GM13977 (cell line): ENCODE measurements at regions of chr1 and their contacts with region 1.

Region 1: DNA sequence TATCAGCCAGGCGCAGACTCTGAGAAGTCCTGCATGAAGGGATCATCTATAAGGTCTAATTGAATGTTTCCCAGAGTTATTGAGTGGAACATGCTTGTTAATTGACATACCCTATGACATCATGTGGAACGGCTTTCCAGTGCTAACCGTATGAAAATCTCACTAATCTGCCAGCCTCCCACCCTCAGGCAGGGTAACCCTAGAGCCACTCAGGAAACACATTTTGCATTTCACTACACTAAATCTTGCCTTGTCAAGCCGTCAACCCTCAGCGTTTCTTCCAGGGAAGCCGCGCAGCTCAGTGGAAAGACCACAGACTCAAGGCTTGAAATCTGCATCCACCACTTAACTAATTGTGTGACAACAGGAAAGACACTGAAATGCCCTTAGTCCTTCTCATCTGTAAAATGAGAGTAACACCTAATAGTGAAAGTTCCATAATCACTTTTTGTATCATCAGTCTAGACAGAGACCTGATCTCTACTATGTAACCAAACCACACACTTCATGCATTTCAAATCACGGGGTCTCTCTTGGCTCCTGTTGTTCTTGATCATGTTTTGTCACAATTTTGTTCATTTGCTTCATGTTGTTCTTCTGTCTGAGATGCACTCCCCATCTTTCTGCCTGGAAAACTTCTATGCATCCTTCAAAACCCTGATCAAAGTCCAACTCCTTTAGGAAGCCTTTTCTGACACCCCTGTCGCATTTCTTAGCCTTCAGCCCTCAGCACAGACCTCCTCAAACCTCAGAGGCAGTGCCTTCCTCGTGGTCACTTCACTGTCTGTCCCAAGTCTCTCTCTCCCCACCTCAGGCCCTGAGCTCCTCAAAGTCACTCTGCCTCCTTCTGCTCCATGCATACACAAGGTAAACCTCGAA is 246.5 kb downstream of the TOMM20 start:
- DNase-seq: peak; percentile 81
- CTCF ChIP-seq: no peak

Region 2: GRCh38 chr1:234771642-234772344 is 110.3 kb before region 1 on chr1:
- in situ Hi-C with region 1: no loop called
- DNase-seq: peak; percentile 22
- CTCF ChIP-seq: no peak

Region 3: GRCh38 chr1:234933475-234933874 is 51.3 kb after region 1 on chr1:
- in situ Hi-C with region 1: loop called (anchors 10 kb)
- DNase-seq: peak; percentile 75
- CTCF ChIP-seq: no peak